Posterior cingulate gyrus (tissue), 11 donors: ENCODE measurements at regions of chr5 and their contacts with region 1.

Region 1: DNA sequence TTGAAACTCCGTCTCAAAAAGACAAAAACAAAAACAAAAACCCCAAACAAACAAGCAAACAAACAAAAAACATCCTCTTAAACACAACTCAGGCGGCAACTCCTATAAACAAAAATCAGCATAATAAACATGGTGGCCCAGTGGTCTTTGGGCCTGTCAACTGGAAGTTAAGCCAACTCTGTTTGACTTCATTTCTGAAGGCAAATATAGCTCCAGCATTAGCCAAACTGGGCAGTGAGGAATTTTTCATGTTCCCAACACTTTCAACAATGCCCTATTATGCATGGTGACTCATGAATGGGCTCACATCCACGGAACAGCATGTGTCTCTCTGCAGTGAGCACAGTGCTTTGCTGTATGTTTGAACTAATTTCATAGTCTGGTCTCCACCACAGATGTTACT is 143.9 kb upstream of the STC2 start:
- DNase-seq: peak; percentile 48 to 96 (median 81)

Region 2: DNA sequence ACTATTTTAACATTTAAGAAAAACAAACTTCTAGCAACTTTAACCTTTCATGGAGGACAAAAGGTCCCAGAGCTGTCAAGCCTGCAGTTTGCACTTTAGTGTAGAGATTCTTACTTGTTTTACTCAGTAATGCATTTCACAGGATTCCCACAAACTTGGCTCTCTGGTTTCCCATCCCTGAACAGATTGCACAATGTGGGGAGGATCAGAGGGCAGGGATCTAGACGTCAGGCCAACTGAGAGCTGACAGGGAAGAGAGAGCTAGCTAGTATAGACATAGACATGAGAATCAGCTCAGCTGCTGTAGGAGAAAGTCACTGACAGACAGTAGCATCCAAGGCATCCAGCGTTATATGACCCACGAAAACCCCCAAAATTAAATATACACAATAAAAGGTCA is 348.7 kb before region 1 on chr5:
- intact Hi-C with region 1: no loop called
- DNase-seq: no peak

Region 3: DNA sequence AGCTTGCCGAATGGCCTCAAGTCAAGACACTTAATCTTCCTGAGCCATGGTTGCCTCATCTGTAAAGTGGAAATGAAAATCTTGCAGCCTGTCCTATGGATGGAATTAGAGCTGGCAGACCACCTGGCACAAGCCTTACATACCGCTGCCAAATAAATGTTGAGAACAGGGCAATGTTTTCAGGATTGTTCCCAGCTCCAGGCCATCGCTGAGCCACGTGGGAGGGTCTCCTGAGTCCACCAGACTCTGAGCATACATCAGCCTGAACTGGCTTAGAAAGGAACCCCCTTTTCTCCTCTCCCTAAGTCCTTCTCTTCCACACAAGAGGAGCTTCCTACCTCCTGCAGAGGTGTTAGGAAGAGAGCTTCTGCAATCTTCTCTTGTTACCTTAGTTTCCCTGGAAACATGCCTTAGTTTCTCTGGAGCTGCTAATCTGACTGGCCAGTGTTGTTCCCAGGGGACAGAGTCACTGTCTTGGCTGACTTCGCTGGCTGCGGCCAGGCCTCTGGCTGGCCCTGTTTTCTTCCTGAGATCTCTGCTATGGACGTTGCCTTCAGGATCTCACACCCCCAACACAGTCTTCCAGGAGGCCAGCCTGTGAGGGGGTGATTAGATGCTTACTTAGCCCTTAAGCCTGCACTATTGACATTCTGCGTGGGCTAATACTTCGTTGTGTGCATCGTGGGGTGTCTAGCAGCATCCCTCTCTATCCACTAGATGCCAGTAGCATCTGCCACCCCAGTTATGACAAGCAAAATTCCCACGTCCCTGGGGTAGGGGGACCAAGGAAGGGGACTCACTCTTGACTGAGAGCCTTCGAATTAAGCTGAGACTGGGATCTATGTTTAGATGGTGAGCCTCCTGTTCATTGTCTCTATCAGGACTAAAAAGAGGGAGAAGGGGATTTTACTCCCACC is 82.2 kb after region 1 on chr5:
- intact Hi-C with region 1: loop called (anchors 2 kb)
- DNase-seq: peak in 1 of 10 donors; percentile 32